HCT116 (cell line): ENCODE measurements at regions of chr11 and their contacts with region 1.

Region 1: DNA sequence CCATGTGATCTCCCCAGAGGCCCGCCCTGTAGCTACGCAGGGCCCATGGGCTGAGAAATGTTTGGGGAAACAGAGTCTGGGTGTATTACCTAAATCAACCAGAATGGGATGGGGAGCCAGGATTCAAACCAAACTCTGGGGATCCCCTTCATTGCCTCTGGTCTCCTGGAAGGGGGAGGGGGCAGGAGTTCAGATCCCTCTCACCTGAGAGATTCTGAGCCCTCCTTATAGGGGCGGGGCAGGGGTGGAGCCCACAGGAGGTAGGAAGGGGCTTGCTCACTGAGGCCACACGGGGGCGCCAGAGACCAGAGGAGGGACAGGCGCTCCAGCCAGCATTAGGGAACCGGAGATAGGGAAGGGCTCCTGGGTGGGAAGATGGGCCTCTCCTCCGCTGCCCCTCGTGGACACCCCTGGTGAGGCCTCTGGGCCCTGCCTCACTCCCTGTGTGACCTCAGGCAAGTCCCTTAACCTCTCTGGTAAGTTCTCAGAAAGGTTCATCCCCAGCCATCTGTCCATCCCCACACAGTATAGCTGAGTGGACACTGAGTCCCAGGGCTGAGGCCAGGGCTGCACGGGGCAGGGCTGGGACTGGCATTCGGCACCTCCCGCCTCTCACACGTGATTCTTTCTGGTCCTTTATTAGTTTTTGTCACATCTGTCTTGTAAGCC is 2.7 kb upstream of the CDC42BPG start:
- DNase-seq: peak; percentile 87
- ATAC-seq: peak; percentile 65
- H3K4me3 ChIP-seq: 0 out of 4 replicates have a peak overlapping the region, but pooled peaks of 1 of the 2 experiments have one; percentile 19
- H3K27ac ChIP-seq: peak overlapping the region; percentile 88
- H3K4me1 ChIP-seq: peaks cover 72 to 92% of the 10 kb centered on the region in 2 experiments
- H3K27me3 ChIP-seq: no peaks in the 10 kb centered on the region
- CTCF ChIP-seq: peak in 2 of 3 experiments; percentile 94 to 95; a peak in 4 of 6 replicates
- POLR2A ChIP-seq: no peak
- RAD21 ChIP-seq: no peak

Region 2: GRCh38 chr11:64787526-64788320 is 59.4 kb before region 1 on chr11:
- CTCF ChIA-PET with region 1: interaction called, 5 read pairs
- POLR2A ChIA-PET with region 1: no interaction called
- RAD21 ChIA-PET with region 1: no interaction called
- intact Hi-C with region 1: loop called (anchors 5 kb)
- DNase-seq: no peak
- ATAC-seq: peak; percentile 91
- H3K4me3 ChIP-seq: no peak overlapping the region
- H3K27ac ChIP-seq: 0 out of 2 replicates have a peak overlapping the region, but pooled peaks have one; percentile 1
- H3K4me1 ChIP-seq: peaks cover 2 to 9% of the 10 kb centered on the region in 2 experiments; a peak in 3 of 4 replicates
- H3K27me3 ChIP-seq: no peaks in the 10 kb centered on the region
- CTCF ChIP-seq: peak; percentile 71 to 95 (median 93); a peak in 5 of 6 replicates
- POLR2A ChIP-seq: no peak
- RAD21 ChIP-seq: peak; percentile 85

Region 3: DNA sequence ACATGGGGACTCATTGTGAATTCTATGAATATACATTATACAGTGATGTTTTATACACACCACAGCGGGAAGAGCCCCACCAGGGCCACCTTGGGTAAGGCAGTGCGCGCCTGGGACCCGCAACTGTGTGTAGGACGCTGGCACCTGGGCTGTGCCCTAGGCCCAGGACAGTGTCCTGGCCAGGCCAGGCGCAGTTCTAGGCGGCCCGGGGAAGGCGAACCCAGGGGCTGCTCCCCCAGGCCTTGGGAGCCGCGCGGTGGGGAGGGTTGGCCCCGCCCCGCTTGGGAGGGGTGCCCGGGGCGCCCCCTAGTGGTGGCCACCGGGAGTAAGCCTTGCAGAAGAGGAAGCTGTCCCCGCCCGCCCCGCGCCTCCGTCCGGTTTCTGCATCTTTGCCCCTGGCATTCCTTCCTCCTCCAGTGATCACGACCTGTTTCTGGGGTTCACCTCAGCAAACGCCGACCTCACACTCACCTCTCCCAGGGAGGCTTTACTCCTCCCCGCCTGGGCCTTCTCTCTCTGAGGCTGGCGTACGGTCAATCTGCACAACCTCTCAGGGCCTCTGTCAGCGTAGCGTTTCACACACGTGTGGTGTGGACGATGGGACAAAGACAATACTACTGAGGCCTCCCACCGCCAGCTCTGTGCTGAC is 40.7 kb after region 1 on chr11:
- CTCF ChIA-PET with region 1: interaction called, 112 read pairs
- POLR2A ChIA-PET with region 1: interaction called, 9 read pairs
- RAD21 ChIA-PET with region 1: interaction called, 3 to 4 read pairs
- intact Hi-C with region 1: no loop called
- DNase-seq: peak; percentile 39
- ATAC-seq: peak; percentile 92
- H3K4me3 ChIP-seq: peak overlapping the region; percentile 31 to 51
- H3K27ac ChIP-seq: peak overlapping the region; percentile 40
- H3K4me1 ChIP-seq: peaks cover 7 to 31% of the 10 kb centered on the region in 2 experiments; a peak in 3 of 4 replicates
- H3K27me3 ChIP-seq: no peaks in the 10 kb centered on the region
- CTCF ChIP-seq: peak; percentile 83 to 93 (median 88)
- POLR2A ChIP-seq: peak; percentile 40
- RAD21 ChIP-seq: peak; percentile 63

Region 4: DNA sequence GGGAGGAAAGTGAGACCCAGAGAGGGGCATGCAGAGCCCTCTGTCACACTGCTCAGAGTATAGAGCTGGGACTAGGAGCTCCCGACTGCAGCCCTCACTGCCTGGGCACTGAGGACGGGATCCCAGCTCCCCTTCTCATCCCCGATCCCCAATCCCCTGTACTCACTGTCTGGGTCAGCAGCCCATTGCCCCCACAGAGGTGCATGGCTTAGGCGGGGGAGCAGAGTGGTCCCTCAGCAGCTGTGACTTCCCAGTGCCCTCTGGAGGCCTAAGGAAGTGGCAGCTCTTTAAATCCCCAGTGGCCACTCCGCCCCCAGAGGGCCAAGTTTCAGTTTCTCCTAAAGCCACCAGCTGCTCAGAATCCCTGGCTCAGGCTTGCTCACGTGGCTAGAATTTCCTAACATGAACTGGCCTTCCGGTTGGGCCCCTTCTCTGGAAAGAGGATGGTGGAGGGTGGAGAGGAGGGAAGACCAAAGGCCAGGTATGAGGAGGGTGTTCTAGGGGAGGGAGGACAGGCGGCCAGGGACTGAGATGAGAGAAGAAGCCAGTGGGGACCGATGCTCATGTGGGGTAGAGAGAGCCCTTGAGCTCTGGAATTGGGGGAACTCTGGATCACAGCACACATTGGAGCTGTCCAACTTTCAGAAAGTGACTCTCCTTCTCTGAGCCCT is 149.7 kb after region 1 on chr11 and contains the start of gene BATF2:
- CTCF ChIA-PET with region 1: interaction called, 6 read pairs
- POLR2A ChIA-PET with region 1: interaction called, 3 read pairs
- RAD21 ChIA-PET with region 1: interaction called, 4 to 5 read pairs
- intact Hi-C with region 1: loop called (anchors 5 kb)
- DNase-seq: peak; percentile 50
- ATAC-seq: peak; percentile 90
- H3K4me3 ChIP-seq: peak within 1 kb of the TSS; percentile 30 to 50
- H3K27ac ChIP-seq: peak within 1 kb of the TSS; percentile 34; the same call in 1 of the 2 replicates
- H3K4me1 ChIP-seq: peaks cover 13 to 40% of the 10 kb centered on the region in 2 experiments; a peak in 3 of 4 replicates
- H3K27me3 ChIP-seq: no peaks in the 10 kb centered on the region
- CTCF ChIP-seq: peak; percentile 51 to 85 (median 52)
- POLR2A ChIP-seq: no peak
- RAD21 ChIP-seq: peak; percentile 78
- total RNA-seq, gene BATF2: 2.1 TPM

Region 5: DNA sequence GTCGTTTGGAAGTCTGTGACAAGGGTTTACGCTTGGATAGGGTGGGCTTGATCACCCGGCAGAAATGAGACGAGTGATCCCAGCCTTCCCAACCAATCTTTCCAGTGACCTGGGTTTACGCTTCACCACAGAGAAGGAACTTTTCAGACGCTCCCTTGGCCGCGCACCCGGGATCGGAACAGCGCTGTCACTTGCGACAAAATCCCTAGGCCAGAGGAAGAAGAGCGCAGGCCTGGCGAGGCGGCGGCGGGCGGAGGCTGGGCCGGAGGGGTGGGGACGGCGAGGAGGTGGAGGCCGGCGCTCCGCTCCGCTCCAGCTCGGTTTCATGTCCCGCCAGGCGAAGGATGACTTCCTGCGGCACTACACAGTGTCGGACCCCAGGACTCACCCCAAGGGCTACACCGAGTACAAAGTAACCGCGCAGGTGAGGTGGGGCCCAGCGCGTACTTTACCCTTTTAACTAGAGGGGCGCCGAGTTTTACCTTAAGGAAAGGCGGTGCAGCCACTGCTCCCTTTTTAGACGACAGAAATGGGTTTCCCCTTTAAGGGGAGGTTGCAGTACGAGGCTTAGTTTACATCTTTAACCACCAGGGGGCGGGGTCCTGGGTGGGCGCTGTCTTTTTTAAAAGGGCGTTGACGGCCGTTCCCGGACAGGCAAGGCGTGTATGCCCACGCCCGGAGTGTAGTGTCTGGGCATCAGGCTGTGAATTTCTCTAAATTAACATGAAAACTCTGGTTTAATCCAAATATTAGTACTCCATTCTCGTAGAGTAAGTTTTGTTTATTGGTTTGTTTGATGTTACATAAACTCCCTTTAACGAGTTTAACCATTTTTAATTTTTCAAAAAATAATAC is 180.3 kb after region 1 on chr11 and contains the start of gene SNX15:
- CTCF ChIA-PET with region 1: no interaction called
- POLR2A ChIA-PET with region 1: no interaction called
- RAD21 ChIA-PET with region 1: interaction called in 1 of 2 experiments, 4 read pairs
- intact Hi-C with region 1: loop called (anchors 5 kb)
- DNase-seq: peak; percentile 97
- ATAC-seq: peak; percentile 93
- H3K4me3 ChIP-seq: peak within 1 kb of the TSS; percentile 39 to 44
- H3K27ac ChIP-seq: peak within 1 kb of the TSS; percentile 75
- H3K4me1 ChIP-seq: peaks cover 11 to 22% of the 10 kb centered on the region in 2 experiments; a peak in 3 of 4 replicates
- H3K27me3 ChIP-seq: no peaks in the 10 kb centered on the region
- CTCF ChIP-seq: peak; percentile 12 to 61 (median 42); a peak in 4 of 6 replicates
- POLR2A ChIP-seq: peak; percentile 49
- RAD21 ChIP-seq: no peak
- total RNA-seq, gene SNX15: 16.8 TPM

Region 6: GRCh38 chr11:65180877-65181568 is 333.9 kb after region 1 on chr11:
- CTCF ChIA-PET with region 1: interaction called, 3 read pairs
- POLR2A ChIA-PET with region 1: no interaction called
- RAD21 ChIA-PET with region 1: no interaction called
- intact Hi-C with region 1: loop called (anchors 5 kb)
- DNase-seq: peak; percentile 29
- ATAC-seq: peak; percentile 66
- H3K4me3 ChIP-seq: peak overlapping the region; percentile 81 to 95
- H3K27ac ChIP-seq: peak overlapping the region; percentile 100
- H3K4me1 ChIP-seq: peaks cover 23 to 35% of the 10 kb centered on the region in 2 experiments
- H3K27me3 ChIP-seq: no peaks in the 10 kb centered on the region
- CTCF ChIP-seq: peak in 2 of 3 experiments; percentile 49 to 56; a peak in 5 of 6 replicates
- POLR2A ChIP-seq: no peak
- RAD21 ChIP-seq: peak; percentile 86